ENCODE measurements at regions of chr15 and their contacts with region 1.

Region 1: DNA sequence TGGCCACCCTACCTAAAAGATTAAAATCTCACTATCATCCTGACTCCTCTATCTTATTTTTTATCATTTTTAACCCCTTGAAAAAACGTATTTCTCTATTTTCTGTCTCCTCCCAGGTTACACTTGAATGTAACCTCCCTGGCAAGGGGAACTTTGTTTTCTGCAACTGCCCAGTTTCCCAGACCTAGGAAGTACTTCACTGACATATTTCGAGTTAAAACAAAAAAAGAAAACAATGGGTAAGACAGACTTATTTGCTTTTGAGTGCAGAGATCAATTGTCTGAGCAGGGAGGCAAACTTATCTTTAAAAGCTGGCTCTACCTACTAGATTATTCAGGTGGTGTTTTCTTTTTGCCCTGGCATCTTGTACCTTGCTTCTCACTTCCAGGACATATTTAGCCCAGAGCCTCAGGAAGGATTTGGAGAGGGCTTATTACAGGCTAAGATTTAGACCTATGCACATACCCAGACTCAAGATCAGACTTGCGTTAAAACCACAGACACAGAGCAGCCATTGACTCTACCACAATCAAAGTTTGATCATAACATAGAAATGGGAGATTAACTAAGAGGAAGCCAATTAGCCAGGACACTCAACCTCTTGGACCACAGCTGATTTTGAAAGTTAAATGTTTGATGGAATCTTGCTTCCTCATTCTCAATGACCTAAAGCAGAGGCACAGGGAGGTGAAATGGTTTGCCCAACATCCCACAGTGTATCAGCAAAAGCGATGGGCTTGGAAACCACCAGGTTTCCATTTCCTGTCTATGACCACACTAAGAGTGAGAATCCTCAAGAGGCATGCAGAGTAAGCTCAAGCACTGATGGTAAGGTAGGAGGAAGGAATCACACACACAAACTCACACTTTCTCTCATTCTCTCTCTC is 169.5 kb upstream of the THBS1 start:
- DNase-seq: no peak
- ATAC-seq: no peak
- H3K4me3 ChIP-seq: no peak overlapping the region
- H3K27ac ChIP-seq: no peak overlapping the region
- H3K4me1 ChIP-seq: no peaks in the 10 kb centered on the region
- H3K27me3 ChIP-seq: no peaks in the 10 kb centered on the region
- CTCF ChIP-seq: no peak

Region 2: DNA sequence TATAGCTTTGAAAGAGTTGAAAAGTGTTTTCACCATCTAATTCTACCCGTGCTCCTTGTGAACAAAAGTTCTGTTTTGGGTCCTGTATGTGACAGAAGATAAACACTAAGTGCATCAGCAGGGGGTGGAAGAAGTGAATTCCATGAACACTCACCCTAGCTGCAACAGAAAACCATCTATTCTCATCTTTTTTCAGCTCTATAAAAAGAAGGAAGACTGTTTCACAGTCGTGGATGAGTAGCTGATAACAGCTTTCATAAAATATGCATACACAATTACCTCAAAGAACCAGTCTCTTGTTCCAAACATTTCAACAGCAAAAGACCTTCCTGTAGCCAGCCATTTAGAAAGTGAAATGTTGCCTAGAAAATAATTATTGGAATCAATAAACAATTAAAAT is 565.0 kb before region 1 on chr15:
- CTCF ChIA-PET with region 1: no interaction called
- POLR2A ChIA-PET with region 1: interaction called, 11 read pairs
- in situ Hi-C with region 1: no loop called
- intact Hi-C with region 1: no loop called
- DNase-seq: no peak
- ATAC-seq: no peak
- H3K4me3 ChIP-seq: no peak overlapping the region
- H3K27ac ChIP-seq: no peak overlapping the region
- H3K4me1 ChIP-seq: no peaks in the 10 kb centered on the region
- H3K27me3 ChIP-seq: no peaks in the 10 kb centered on the region
- CTCF ChIP-seq: no peak

Region 3: GRCh38 chr15:40739854-40740253 is 1328.5 kb after region 1 on chr15:
- CTCF ChIA-PET with region 1: no interaction called
- POLR2A ChIA-PET with region 1: no interaction called
- in situ Hi-C with region 1: no loop called
- intact Hi-C with region 1: no loop called
- DNase-seq: no peak
- ATAC-seq: 0 out of 2 replicates have a peak, but pooled peaks have one; percentile 31
- H3K4me3 ChIP-seq: no peak overlapping the region
- H3K27ac ChIP-seq: no peak overlapping the region
- H3K4me1 ChIP-seq: no peaks in the 10 kb centered on the region
- H3K27me3 ChIP-seq: no peaks in the 10 kb centered on the region
- CTCF ChIP-seq: no peak; the same call in 1 of the 2 replicates